ENCODE measurements at regions of chr5 and their contacts with region 1.

Region 1: DNA sequence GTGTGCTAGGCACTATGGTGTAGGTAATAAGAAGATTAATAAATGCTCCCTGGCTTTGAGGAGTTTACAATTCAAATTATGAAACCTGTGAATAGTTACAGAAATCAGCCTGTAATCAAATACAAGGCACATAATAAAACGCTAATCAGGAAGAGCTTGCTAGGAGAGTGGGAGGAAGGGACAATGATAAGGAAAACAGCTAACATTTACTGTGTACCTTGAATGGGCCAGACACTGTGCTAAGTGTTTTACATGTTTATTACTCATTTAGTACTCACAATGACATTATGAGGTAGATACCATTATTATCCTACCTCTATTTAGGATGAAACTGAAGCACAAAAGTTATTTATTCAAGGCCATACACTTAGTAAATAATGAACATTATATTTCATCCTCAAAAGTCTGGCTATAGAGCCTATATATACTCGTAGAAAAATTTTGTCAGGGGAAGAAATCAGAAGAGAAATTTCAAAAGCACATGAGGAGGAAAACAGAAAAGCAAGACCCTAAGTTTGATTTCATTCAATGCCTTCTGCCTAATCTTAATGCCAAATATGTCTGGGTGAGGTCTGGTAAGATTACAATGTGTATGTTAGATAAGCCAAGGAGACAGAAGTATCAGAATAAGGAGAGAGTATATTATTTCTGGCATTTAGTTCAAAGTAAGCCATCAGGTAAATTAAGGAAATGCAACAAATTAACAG is 35.9 kb downstream of the AFF4 start:
- H3K4me3 Mint-ChIP-seq: no peak overlapping the region
- H3K27ac Mint-ChIP-seq: no peak overlapping the region
- H3K4me1 Mint-ChIP-seq: peaks cover 19% of the 10 kb centered on the region
- H3K27me3 Mint-ChIP-seq: no peaks in the 10 kb centered on the region

Region 2: GRCh38 chr5:133006653-133007052 is 79.1 kb after region 1 on chr5:
- intact Hi-C with region 1: loop called (anchors 10 kb)
- H3K4me3 Mint-ChIP-seq: no peak overlapping the region
- H3K27ac Mint-ChIP-seq: no peak overlapping the region
- H3K4me1 Mint-ChIP-seq: no peaks in the 10 kb centered on the region
- H3K27me3 Mint-ChIP-seq: no peaks in the 10 kb centered on the region

Region 3: DNA sequence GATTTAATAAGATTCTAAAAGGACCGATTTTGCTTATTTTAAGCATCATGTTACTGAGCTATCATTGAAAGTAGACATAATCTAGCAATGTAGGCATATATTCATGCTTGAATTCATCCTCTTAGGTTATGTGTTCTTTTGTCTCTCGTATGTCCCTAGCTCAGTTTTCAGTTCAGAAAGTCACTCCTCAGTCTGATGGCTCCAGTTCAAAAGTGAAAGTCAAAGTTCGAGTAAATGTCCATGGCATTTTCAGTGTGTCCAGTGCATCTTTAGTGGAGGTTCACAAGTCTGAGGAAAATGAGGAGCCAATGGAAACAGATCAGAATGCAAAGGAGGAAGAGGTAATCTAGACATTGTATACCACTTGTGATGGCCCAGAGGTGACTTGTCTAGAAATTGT is 163.5 kb after region 1 on chr5:
- intact Hi-C with region 1: loop called (anchors 10 kb)
- H3K4me3 Mint-ChIP-seq: no peak overlapping the region
- H3K27ac Mint-ChIP-seq: no peak overlapping the region
- H3K4me1 Mint-ChIP-seq: peaks cover 4% of the 10 kb centered on the region
- H3K27me3 Mint-ChIP-seq: no peaks in the 10 kb centered on the region